Activated naive CD4-positive, alpha-beta T cell treated with anti-CD3 and anti-CD28 coated beads for 36 hours (primary cell): ENCODE measurements at regions of chr3 and their contacts with region 1.

Region 1: GRCh38 chr3:112338021-112338726 is 5.2 kb downstream of the CD200 start:
- DNase-seq: peak; percentile 33
- H3K4me3 Mint-ChIP-seq: peak overlapping the region; percentile 33
- H3K27ac Mint-ChIP-seq: peak overlapping the region; percentile 87
- H3K4me1 Mint-ChIP-seq: peaks cover 66% of the 10 kb centered on the region
- H3K27me3 Mint-ChIP-seq: no peaks in the 10 kb centered on the region

Region 2: DNA sequence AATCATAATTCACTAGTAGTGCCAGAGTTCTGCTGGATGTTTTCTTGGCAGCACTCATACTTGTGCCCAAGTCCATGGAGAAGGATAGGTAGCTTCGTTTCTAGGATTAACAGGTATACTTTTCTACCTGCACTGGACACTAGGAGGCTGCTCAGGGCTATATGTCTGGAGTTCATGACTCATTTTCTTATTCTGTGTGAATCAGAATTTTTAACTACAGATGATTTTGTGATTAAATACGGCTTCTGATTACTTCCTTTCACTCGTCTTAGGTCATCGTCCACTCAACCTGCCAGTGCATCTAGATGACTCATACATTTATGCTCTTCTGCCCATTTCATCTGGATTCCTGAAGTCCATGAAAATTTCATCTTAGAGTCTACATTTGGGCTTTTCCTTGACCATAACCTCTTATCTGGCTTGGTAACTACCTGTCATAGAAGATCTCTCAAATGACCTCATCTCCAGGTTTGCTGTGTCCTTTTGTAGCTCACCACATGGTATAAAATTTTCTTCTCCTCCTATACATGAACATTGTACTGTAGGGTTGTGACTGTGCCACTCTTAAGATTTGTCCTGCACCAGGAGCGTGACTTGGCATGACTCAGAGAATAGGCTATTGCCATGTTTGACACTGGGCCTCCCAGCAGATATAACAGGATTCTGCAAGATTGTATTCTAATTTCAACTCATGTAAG is 138.4 kb before region 1 on chr3:
- CTCF ChIA-PET with region 1: no interaction called
- intact Hi-C with region 1: no loop called
- DNase-seq: no peak
- H3K4me3 Mint-ChIP-seq: no peak overlapping the region
- H3K27ac Mint-ChIP-seq: no peak overlapping the region
- H3K4me1 Mint-ChIP-seq: no peaks in the 10 kb centered on the region
- H3K27me3 Mint-ChIP-seq: no peaks in the 10 kb centered on the region

Region 3: DNA sequence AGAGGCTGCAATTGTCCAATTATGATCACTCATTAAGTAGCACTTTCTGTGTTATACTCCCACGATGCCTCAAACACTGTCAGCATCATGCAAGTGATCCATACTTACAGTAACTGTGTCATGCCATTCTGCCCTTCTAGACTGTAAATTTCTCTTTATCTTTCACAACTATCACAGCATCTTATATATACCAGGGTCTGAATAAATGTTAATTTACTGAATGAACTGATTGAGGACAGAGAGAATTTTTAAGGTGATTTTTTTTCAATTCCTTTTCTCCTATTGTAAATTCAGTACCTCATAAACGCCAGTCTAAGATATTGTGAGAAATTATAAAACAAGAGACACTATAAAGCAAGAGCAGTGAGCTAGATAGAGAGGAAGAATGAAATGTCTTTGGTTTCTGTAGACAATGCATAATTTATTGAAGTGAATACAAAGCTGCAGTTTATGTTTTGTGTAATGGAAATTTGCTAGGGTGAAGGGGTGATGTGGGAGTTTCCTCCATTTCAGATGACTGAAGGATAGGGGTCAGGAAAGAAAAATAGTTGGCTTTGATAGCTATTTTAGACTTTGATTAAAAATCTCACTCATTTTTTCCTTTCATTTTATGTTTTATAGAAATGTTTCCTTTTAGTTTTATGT is 12.1 kb after region 1 on chr3:
- CTCF ChIA-PET with region 1: interaction called, 8 read pairs
- intact Hi-C with region 1: loop called (anchors 1 kb)
- DNase-seq: no peak
- H3K4me3 Mint-ChIP-seq: no peak overlapping the region
- H3K27ac Mint-ChIP-seq: peak overlapping the region; percentile 34
- H3K4me1 Mint-ChIP-seq: peaks cover 74% of the 10 kb centered on the region
- H3K27me3 Mint-ChIP-seq: no peaks in the 10 kb centered on the region

Region 4: GRCh38 chr3:112390783-112391641 is 52.8 kb after region 1 on chr3:
- CTCF ChIA-PET with region 1: no interaction called
- intact Hi-C with region 1: loop called (anchors 1 kb)
- DNase-seq: peak; percentile 36
- H3K4me3 Mint-ChIP-seq: peak overlapping the region; percentile 10
- H3K27ac Mint-ChIP-seq: peak overlapping the region; percentile 66
- H3K4me1 Mint-ChIP-seq: peaks cover 58% of the 10 kb centered on the region
- H3K27me3 Mint-ChIP-seq: no peaks in the 10 kb centered on the region

Region 5: GRCh38 chr3:112489674-112490479 is 151.7 kb after region 1 on chr3:
- CTCF ChIA-PET with region 1: interaction called, 33 read pairs
- intact Hi-C with region 1: loop called (anchors 1 kb)
- DNase-seq: peak; percentile 56
- H3K4me3 Mint-ChIP-seq: peak overlapping the region; percentile 100
- H3K27ac Mint-ChIP-seq: peak overlapping the region; percentile 100
- H3K4me1 Mint-ChIP-seq: peaks cover 81% of the 10 kb centered on the region
- H3K27me3 Mint-ChIP-seq: no peaks in the 10 kb centered on the region